ENCODE measurements at regions of chr12 and their contacts with region 1.

Region 1: DNA sequence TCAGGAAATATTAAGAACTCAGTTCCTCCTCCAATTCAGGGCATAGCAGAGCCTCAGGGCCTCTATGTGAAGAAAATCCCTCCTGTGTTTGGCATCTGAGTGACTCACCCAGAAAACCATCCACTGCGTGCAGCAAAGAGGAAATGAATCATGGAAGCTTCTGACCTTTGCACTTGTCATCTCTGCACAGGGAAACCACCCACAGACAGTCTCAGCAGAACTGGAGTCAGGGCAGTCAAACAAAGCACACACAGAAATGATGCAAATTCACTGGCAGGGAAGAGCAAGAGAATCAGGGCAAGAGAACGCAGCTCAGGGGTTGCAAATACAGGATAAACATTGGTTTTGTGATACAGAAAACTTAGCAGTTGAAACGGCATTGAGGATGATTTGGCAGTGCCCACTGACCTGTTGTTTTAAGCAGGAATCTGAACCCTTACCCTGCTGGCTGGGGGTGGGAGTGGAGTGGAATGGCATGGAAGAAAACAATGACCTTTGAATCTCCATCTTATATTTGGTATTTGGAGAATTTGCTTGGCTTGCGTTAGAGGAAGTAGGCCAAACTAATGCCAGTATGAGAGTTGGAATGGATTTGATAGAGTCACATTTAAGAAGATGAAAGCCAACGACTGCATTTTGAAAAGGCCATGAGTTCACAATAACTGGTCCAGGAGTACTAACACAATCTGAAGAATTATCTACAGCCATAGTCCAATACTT is 53.5 kb downstream of the PHLDA1 start:
- DNase-seq: peak; percentile 89
- ATAC-seq: peak; percentile 90
- H3K4me3 Mint-ChIP-seq: peak overlapping the region; percentile 29
- H3K27ac Mint-ChIP-seq: peak overlapping the region; percentile 90
- H3K4me1 Mint-ChIP-seq: peaks cover 52% of the 10 kb centered on the region
- H3K27me3 Mint-ChIP-seq: no peaks in the 10 kb centered on the region

Region 2: DNA sequence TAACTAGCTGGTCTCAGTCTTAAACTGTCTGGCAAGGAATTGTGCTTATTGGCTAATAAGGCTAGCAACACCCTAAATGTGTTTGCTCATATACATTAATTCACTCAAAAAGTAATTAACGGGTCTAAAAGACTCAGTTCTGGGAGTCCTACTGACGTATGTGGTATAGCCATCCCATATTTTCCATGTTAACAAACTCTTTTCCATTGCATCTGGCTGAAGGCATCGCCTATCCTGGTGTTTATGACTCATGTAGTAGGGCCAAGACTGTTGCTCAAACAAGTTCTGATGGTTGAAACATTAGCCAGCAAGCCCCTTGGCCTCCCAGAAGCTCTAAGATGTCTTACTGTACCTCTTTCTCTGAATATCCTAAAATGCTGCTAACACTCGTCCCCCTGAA is 45.0 kb before region 1 on chr12:
- CTCF ChIA-PET with region 1: interaction called, 9 read pairs
- POLR2A ChIA-PET with region 1: interaction called, 21 read pairs
- DNase-seq: no peak
- ATAC-seq: no peak
- H3K4me3 Mint-ChIP-seq: no peak overlapping the region
- H3K27ac Mint-ChIP-seq: no peak overlapping the region
- H3K4me1 Mint-ChIP-seq: peaks cover 24% of the 10 kb centered on the region
- H3K27me3 Mint-ChIP-seq: peaks cover 3% of the 10 kb centered on the region

Region 3: GRCh38 chr12:75944097-75944904 is 33.8 kb before region 1 on chr12:
- CTCF ChIA-PET with region 1: interaction called, 4 read pairs
- POLR2A ChIA-PET with region 1: interaction called, 10 read pairs
- DNase-seq: peak; percentile 31
- ATAC-seq: peak; percentile 91
- H3K4me3 Mint-ChIP-seq: peak overlapping the region; percentile 61
- H3K27ac Mint-ChIP-seq: peak overlapping the region; percentile 97
- H3K4me1 Mint-ChIP-seq: peaks cover 25% of the 10 kb centered on the region
- H3K27me3 Mint-ChIP-seq: no peaks in the 10 kb centered on the region

Region 4: DNA sequence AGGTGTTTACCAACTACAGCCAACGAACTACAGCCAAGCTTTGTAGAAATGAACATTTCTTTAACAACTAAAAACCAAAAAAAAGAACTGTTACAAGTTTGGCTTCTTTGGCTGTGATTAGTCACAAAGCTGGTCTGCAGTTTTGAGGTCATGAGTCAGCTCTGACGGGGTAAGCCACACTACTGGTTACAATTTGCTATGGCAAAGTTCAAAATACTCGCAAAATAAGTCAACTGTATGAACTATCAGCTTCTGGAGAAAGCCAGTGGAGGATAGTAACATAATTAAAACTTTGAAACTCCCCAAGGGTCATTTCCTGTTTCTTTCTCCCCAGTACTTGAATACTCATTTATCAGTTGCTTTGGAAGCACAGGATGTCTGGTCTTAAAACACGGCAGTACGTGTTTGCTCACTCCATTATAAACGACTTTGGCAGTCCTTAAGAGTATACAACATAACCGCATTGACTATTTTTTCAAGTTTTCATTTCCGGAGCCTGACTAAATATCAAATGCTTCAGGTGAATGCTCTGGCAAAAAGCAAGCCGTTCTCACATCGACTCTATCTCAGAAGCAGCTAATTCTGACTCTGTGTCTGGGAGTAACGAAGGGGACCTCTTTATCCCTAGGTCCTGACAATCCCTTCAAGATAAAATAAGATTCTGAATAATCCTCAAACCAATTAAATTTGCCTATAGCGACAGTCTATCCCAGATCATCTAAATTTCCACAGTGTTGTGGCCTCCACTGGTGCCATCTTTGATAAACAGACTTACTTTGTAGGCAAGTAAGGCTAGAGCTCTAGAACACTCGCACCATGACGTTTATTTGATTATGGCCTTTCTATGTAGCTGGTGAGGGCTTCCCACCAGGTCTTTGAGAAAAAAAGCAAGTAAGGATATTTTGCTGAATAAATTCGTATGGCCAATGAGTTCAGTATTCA is 42.9 kb after region 1 on chr12:
- CTCF ChIA-PET with region 1: interaction called, 15 read pairs
- POLR2A ChIA-PET with region 1: interaction called, 46 read pairs
- DNase-seq: peak; percentile 85
- ATAC-seq: peak; percentile 84
- H3K4me3 Mint-ChIP-seq: peak overlapping the region; percentile 52
- H3K27ac Mint-ChIP-seq: peak overlapping the region; percentile 96
- H3K4me1 Mint-ChIP-seq: peaks cover 49% of the 10 kb centered on the region
- H3K27me3 Mint-ChIP-seq: no peaks in the 10 kb centered on the region